Activated T-helper 1 cell treated with anti-CD3 and anti-CD28 coated beads, Interleukin-12 subunit alpha, Interleukin-12 subunit beta, Interleukin-2, Interleukin-4 antibody, amounts not matched to agents 30 ng/mL and 10 ng/mL and 1 ng/mL, durations not matched to agents 14 hours and 24 hours and 36 hours (primary cell): ENCODE measurements at regions of chr1 and their contacts with region 1.

Region 1: GRCh38 chr1:199113265-199113869 is 474.5 kb downstream of the PTPRC start:
- DNase-seq: peak; percentile 58
- H3K4me3 Mint-ChIP-seq: no peak overlapping the region
- H3K27ac Mint-ChIP-seq: no peak overlapping the region
- H3K4me1 Mint-ChIP-seq: peaks cover 31% of the 10 kb centered on the region
- H3K27me3 Mint-ChIP-seq: no peaks in the 10 kb centered on the region

Region 2: GRCh38 chr1:198763298-198763714 is 350.1 kb before region 1 on chr1:
- intact Hi-C with region 1: loop called (anchors 2 kb)
- DNase-seq: no peak
- H3K4me3 Mint-ChIP-seq: no peak overlapping the region
- H3K27ac Mint-ChIP-seq: no peak overlapping the region
- H3K4me1 Mint-ChIP-seq: peaks cover 29% of the 10 kb centered on the region
- H3K27me3 Mint-ChIP-seq: no peaks in the 10 kb centered on the region

Region 3: GRCh38 chr1:198771563-198772153 is 341.7 kb before region 1 on chr1:
- intact Hi-C with region 1: loop called (anchors 1 kb)
- DNase-seq: no peak
- H3K4me3 Mint-ChIP-seq: no peak overlapping the region
- H3K27ac Mint-ChIP-seq: no peak overlapping the region
- H3K4me1 Mint-ChIP-seq: peaks cover 11% of the 10 kb centered on the region
- H3K27me3 Mint-ChIP-seq: peaks cover 5% of the 10 kb centered on the region

Region 4: GRCh38 chr1:198850196-198850595 is 263.2 kb before region 1 on chr1:
- intact Hi-C with region 1: loop called (anchors 5 kb)
- DNase-seq: no peak
- H3K4me3 Mint-ChIP-seq: no peak overlapping the region
- H3K27ac Mint-ChIP-seq: no peak overlapping the region
- H3K4me1 Mint-ChIP-seq: peaks cover 13% of the 10 kb centered on the region
- H3K27me3 Mint-ChIP-seq: no peaks in the 10 kb centered on the region

Region 5: DNA sequence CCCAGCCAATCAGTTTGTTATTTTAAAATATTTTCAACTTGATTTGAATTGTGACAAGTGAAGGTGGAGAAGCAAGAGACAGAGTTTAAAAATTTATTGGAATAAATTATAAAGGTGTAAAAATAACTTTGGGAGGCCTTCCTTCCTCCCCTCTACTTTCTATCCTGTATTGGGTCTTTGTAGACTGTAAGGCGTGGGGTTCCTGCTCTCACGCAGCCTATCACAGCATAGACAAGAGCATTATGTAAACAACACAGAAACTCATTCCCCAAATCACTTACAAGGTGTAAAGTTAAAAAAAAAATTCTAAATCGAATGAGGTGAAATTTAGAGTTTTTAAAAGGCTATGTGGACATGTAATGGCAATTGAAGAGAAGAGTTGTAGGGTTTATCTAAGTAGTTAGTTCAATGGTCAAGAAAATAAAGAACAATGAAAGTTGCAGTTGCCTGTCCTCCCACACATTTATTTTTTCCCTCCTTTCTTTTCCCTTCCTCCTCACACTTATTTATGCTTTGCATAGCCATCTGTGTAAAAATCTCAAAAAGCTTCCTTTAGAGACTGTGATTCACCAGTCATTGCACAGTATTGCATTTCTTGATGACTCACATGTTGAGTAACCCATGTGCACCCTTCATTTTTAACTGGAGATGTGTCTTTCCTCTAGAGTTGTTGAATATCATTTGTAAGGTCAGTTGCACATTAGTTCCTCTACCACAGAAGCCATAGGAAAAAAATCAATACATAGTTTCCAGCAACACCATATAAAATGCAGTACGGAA is 232.4 kb before region 1 on chr1:
- intact Hi-C with region 1: loop called (anchors 2 kb)
- DNase-seq: no peak
- H3K4me3 Mint-ChIP-seq: no peak overlapping the region
- H3K27ac Mint-ChIP-seq: peak overlapping the region; percentile 71
- H3K4me1 Mint-ChIP-seq: peaks cover 59% of the 10 kb centered on the region
- H3K27me3 Mint-ChIP-seq: no peaks in the 10 kb centered on the region

Region 6: GRCh38 chr1:199243423-199244061 is 130.2 kb after region 1 on chr1:
- intact Hi-C with region 1: loop called (anchors 2 kb)
- DNase-seq: peak; percentile 70
- H3K4me3 Mint-ChIP-seq: no peak overlapping the region
- H3K27ac Mint-ChIP-seq: no peak overlapping the region
- H3K4me1 Mint-ChIP-seq: peaks cover 18% of the 10 kb centered on the region
- H3K27me3 Mint-ChIP-seq: peaks cover 19% of the 10 kb centered on the region